ENCODE measurements at regions of chr9 and their contacts with region 1.

Region 1: DNA sequence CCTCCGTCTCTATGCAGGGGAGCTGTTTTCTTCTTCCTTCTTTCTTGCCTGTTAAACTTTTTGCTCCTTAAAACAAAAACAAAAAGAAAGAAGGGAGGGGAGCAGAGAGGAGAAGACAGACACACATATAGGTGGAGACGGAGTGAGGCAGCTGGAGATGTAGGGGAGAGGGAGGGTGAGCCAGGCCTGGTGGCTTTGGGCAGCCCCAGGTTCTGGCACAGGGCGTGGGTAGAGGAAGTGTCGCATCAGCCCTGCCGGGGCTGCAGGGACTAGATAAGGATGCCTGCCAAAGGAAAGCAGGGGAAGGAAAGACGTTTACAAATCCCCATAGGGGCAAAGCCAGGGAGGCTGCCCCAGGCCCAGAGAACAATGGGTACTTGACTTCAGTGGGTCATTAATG is 38.7 kb upstream of the PTGS1 start:
- DNase-seq: no peak
- ATAC-seq: peak; percentile 58 to 78 (median 64)
- H3K4me3 ChIP-seq: no peak overlapping the region
- H3K27ac ChIP-seq: no peak overlapping the region
- H3K4me1 ChIP-seq: peaks cover 0 to 26% (median 14%) of the 10 kb centered on the region in 12 donors
- H3K27me3 ChIP-seq: no peaks in the 10 kb centered on the region
- CTCF ChIP-seq: no peak
- POLR2A ChIP-seq: no peak

Region 2: GRCh38 chr9:121353241-121354061 is 978.6 kb before region 1 on chr9:
- intact Hi-C with region 1: no loop called
- DNase-seq: no peak
- ATAC-seq: peak in 3 of 4 donors; percentile 4 to 19 (median 9)
- H3K4me3 ChIP-seq: peak overlapping the region in 1 of 12 donors; percentile 12
- H3K27ac ChIP-seq: peak overlapping the region; percentile 69 to 97 (median 90)
- H3K4me1 ChIP-seq: peaks cover 19 to 99% (median 90%) of the 10 kb centered on the region in 12 donors
- H3K27me3 ChIP-seq: no peaks in the 10 kb centered on the region
- CTCF ChIP-seq: no peak
- POLR2A ChIP-seq: no peak

Region 3: DNA sequence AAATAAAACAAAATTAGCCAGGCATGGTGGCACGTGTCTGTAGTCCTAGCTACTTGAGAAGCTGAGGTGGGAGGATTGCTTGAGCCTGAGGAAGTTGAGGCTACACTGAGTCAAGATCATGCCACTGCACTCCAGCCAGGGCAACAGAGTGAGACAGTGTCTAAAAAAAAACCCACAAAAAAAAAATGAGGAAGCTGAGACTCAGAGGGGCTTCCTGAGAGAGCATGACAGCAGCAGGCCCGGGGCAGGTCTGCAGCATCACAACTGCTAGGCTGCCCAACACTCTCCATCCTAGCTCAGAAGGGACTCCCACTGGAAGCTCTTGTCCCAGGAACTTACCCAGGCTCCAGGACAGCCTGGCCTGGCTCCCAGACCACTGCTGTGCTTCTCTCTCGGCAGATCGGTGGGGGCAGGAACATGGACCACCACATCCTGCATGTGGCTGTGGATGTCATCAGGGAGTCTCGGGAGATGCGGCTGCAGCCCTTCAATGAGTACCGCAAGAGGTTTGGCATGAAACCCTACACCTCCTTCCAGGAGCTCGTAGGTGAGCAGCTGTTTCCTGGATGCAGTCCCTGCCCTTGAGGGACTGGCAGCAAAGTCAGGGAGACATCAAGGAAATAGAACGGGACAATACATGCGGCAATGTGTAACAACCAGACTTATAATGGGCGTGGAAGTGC is 57.9 kb after region 1 on chr9:
- intact Hi-C with region 1: loop called in 1 of 10 experiments (anchors 10 kb)
- DNase-seq: no peak
- ATAC-seq: no peak
- H3K4me3 ChIP-seq: no peak overlapping the region
- H3K27ac ChIP-seq: peak overlapping the region in 1 of 12 donors; percentile 2
- H3K4me1 ChIP-seq: peaks cover 0 to 28% (median 5%) of the 10 kb centered on the region in 12 donors
- H3K27me3 ChIP-seq: no peaks in the 10 kb centered on the region
- CTCF ChIP-seq: no peak
- POLR2A ChIP-seq: no peak

Measured in heart left ventricle (tissue), 16 donors.